ENCODE measurements at regions of chr15 and their contacts with region 1.

Region 1: DNA sequence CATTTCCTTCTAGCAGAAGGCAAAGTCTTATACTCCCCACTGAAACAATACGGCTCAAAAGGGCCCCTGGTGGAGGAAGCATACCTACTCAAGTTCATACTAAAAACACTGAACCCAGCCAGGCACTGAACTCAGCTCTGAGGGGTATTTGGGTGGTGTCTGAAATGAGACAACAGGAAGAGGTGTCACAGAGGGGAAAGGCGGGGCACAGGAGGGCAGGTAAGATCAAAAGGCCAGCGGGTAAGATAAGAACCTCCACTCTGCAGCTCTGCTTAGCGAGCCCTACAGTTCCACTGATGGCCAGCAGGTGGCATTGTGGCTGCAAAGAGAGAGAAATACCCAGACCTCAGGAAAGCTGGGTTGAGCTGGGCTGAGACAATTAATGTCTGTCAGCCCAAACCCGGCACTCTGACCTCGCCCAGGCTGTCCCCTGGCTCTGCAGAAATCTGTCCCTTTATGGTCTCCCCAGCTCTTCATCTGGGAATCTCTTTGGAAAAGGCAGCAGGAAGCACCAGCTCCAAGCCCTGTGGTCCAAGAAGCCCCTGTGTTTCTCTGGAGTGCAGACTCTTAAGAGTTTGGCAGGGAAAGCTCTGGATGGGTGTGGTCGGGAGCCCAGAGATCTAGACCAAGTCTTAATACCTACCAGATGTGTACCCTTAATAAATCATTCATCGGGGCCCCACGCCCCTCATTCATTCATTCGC is 8.4 kb downstream of the MFGE8 start:
- DNase-seq: peak; percentile 87
- H3K4me3 ChIP-seq: no peak overlapping the region
- H3K27ac ChIP-seq: no peak overlapping the region
- H3K4me1 ChIP-seq: peaks cover 0 to 12% (median 4%) of the 10 kb centered on the region in 4 donors
- H3K27me3 ChIP-seq: no peaks in the 10 kb centered on the region
- CTCF ChIP-seq: peak; percentile 95 to 99 (median 99)
- EP300 ChIP-seq: no peak
- POLR2A ChIP-seq: no peak

Region 2: DNA sequence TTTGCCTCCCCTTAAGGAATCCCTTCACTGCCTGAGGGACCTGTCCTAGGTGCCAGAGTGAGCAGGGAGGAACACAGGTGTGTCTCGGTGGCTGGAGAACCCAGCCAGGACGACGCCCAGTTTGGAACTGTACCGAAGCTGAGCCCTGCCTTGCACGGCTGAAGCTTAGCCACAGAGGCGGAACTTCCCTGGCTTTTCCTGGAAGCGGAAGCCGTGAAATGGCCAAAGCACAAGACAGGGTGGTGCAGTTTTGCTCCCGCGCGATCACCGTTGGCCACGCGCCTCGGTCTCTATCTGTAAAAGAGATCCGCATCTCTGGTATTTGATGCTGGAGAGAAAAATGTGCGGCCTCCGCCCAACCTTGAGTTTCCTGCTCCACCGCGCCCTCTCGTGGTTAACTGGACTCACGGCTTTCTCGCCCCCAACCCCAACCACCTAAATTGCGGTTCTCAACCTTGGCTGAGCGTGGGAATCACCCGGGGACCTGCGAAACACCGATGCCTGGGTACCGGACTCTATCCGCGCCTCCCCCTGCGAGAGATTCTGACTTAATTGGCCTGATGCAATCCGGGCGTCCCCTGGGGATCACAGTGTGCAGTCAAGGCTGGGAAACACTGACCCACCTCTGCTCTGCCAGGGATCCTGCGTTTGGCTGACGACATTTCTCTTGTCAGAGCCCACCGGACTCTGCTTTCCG is 112.7 kb after region 1 on chr15:
- in situ Hi-C with region 1: loop called (anchors 10 kb)
- intact Hi-C with region 1: loop called (anchors 5 kb)
- DNase-seq: peak; percentile 75
- H3K4me3 ChIP-seq: peak overlapping the region in 1 of 4 donors; percentile 6
- H3K27ac ChIP-seq: peak overlapping the region in 3 of 4 donors; percentile 8 to 34 (median 26)
- H3K4me1 ChIP-seq: peaks cover 0 to 7% (median 4%) of the 10 kb centered on the region in 4 donors
- H3K27me3 ChIP-seq: peaks cover 20% of the 10 kb centered on the region
- CTCF ChIP-seq: peak; percentile 65 to 74 (median 69)
- EP300 ChIP-seq: no peak
- POLR2A ChIP-seq: no peak

Region 3: DNA sequence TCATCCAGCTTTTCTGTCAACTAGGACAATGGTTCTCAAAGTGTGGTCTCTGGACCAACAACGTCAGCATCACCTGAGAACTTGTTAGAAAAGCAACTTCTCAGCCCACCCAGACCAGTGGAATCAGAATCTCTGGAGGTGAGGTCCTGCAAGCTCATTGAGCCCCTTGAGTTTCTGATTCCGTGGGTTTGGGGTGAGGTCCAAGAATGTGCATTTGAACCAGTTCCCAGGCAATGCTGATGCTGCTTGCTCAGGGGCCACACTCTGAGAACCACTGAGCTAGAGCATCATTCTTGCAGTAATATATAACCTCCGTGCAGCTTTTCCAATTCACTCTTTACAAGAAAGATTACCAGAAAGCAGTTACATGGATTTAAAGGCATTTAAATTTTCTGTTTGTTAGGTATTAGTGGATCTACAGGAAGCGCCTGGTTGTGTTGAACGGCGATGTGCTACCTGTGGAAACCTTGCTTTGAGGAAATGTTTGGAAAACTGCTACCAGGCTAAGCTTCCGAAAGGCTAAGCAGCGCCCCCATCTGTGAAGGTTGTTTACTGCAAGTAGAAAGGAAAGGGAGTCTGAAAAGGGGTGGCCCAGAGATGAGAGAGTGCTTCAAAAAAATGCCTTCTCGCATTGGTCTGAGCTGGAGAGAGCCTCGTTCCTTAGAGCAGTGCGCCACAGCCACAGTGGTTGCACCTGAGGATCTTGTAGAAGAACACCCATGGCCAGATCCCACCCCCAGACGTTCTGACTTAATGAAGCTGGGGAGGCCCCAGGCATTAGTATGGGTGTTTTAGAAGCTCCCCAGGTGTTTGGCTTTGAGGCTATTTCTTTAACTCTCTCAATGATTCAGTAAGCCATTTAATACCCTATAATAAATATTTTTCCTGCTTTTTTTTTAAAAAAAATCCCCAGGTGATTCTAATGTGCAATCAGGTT is 266.6 kb after region 1 on chr15:
- in situ Hi-C with region 1: loop called (anchors 10 to 25 kb)
- intact Hi-C with region 1: loop called (anchors 10 kb)
- DNase-seq: peak; percentile 54
- H3K4me3 ChIP-seq: no peak overlapping the region
- H3K27ac ChIP-seq: no peak overlapping the region
- H3K4me1 ChIP-seq: peaks cover 0 to 17% (median 10%) of the 10 kb centered on the region in 4 donors
- H3K27me3 ChIP-seq: no peaks in the 10 kb centered on the region
- CTCF ChIP-seq: peak; percentile 59 to 73 (median 68)
- EP300 ChIP-seq: no peak
- POLR2A ChIP-seq: no peak

Region 4: DNA sequence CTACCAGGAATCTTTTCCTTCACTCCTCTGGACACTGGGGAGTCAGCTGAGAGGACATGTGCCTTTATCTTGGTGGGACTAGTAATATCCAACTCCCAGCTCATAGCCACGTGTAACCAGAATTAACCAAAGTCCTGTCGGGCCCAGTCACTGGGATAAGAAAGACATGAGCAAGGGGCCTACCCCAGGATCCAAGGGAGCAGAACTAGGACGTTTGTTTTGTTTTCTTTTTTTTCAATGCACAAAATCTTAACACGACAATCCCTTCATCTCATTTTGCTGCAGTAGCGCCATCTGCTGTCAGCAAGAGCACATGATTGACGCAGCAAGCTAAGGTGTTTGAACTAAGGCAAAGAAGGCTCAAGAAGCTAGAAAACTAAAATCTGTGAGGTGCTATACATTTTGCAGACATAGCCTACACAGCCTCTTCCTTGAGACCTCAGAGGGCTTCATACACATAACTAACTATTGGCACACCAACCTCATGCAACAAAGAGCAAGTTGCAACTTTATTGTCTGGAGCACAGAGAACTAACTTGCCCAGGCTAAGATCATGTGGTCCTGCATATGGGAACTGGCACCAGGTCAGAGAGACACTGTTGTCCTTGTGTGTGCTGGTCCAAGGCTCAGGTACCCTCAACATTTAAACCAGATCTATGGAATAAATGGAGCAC is 273.0 kb after region 1 on chr15:
- in situ Hi-C with region 1: loop called (anchors 10 to 25 kb)
- intact Hi-C with region 1: loop called (anchors 10 kb)
- DNase-seq: peak; percentile 62
- H3K4me3 ChIP-seq: no peak overlapping the region
- H3K27ac ChIP-seq: no peak overlapping the region
- H3K4me1 ChIP-seq: no peaks in the 10 kb centered on the region
- H3K27me3 ChIP-seq: no peaks in the 10 kb centered on the region
- CTCF ChIP-seq: peak; percentile 74 to 82 (median 79)
- EP300 ChIP-seq: no peak
- POLR2A ChIP-seq: no peak